H1 (cell line): ENCODE measurements at regions of chr21 and their contacts with region 1.

Region 1: DNA sequence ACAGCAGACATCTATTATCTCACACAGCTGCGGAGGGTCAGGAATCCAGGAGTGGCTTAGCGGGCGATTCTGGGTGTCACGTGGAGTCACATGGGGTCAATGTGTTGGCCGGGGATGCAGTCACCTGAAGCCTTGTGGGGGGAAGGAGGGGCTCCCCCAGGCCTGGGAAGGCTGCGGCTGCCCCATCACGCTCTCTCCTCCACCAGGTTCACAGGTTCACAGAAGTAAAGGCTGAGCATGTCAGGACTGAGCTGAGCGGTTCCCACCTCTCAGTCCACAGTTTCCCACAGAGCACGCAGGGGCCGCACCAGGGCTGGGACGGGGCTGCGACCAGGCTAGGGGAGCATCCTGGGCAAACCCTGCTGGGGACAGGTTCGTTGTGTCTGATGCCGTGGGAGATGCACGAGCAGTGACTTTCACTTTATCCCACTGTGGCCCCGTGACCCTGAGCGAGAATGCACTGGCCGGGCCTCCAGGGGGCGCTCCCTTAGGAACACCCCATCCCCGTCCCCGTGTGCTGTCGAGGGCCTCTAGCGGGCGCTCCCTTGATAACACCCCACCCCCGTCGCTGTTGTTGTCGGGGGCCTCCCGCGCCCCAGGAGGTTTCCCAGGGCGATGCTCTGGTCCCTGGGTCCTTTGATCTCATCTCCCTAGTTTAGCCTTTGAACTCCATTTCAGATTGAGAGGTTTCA is 73.2 kb upstream of the TRAPPC10 start:
- DNase-seq: peak; percentile 49 to 96
- H3K4me3 ChIP-seq: 0 out of 8 replicates have a peak overlapping the region, but pooled peaks of 1 of the 4 experiments have one; percentile 21
- H3K27ac ChIP-seq: no peak overlapping the region
- H3K4me1 ChIP-seq: peaks cover 0 to 2% (median 0%) of the 10 kb centered on the region in 4 experiments; a peak in 2 of 7 replicates
- H3K27me3 ChIP-seq: no peaks in the 10 kb centered on the region; a peak in 1 of 7 replicates
- CTCF ChIP-seq: peak in 2 of 3 experiments; percentile 99 to 100; a peak in 3 of 4 replicates
- EP300 ChIP-seq: 0 out of 3 replicates have a peak, but pooled peaks of 1 of the 2 experiments have one; percentile 40
- POLR2A ChIP-seq: no peak
- RAD21 ChIP-seq: peak; percentile 85 to 90

Region 2: DNA sequence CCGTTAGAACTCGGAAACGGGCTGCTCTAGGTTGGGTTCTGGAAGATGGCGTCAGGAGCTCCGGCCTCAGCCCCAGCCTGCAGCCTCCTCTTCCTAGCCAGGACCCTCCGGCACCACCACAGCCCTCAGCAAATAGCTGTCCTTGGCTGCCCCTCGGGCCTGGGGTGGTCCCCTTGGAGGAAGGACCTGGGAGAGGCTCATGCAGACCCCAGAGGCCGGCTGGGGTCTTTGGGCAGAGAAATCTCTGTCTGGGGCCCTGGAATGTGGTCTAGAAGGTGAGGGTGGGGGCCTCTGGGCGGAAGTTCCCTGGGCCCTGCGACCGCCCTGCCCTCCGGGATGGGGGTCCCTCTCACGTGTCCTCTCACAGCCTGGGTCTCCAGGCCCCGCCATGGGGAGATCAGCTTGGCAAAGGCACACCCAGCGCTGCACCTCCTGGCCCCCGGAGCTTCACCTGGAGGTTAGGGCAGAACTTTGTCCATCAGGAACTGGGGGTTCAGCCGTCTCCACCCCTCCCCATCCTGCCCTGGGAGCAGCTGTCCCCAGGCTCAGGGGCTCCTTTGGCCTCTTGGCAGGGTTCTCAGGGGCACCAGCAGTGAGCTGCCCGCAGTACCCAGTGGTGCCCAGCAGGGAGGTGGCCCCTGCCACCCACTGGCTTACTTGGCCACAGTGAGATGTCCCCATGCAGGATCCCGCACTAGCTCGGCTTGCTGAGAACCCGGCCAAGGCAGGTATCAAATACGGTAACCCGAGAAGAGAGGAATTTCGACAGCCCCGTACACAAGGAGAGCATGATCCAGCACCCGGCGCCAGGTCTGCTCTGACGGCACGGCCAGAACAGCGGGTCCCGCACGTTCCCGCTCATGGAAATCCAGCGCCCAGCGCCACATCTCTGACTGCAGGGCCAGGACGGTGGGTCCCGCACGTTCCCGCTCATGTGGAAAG is 112.9 kb before region 1 on chr21:
- CTCF ChIA-PET with region 1: interaction called, 14 read pairs
- POLR2A ChIA-PET with region 1: no interaction called
- DNase-seq: no peak
- H3K4me3 ChIP-seq: no peak overlapping the region
- H3K27ac ChIP-seq: no peak overlapping the region
- H3K4me1 ChIP-seq: peaks cover 0 to 7% (median 4%) of the 10 kb centered on the region in 4 experiments; a peak in 3 of 7 replicates
- H3K27me3 ChIP-seq: no peaks in the 10 kb centered on the region
- CTCF ChIP-seq: peak in 2 of 3 experiments; percentile 27 to 31; a peak in 2 of 4 replicates
- EP300 ChIP-seq: no peak
- POLR2A ChIP-seq: no peak
- RAD21 ChIP-seq: 0 out of 4 replicates have a peak, but pooled peaks of 1 of the 2 experiments have one; percentile 2

Region 3: DNA sequence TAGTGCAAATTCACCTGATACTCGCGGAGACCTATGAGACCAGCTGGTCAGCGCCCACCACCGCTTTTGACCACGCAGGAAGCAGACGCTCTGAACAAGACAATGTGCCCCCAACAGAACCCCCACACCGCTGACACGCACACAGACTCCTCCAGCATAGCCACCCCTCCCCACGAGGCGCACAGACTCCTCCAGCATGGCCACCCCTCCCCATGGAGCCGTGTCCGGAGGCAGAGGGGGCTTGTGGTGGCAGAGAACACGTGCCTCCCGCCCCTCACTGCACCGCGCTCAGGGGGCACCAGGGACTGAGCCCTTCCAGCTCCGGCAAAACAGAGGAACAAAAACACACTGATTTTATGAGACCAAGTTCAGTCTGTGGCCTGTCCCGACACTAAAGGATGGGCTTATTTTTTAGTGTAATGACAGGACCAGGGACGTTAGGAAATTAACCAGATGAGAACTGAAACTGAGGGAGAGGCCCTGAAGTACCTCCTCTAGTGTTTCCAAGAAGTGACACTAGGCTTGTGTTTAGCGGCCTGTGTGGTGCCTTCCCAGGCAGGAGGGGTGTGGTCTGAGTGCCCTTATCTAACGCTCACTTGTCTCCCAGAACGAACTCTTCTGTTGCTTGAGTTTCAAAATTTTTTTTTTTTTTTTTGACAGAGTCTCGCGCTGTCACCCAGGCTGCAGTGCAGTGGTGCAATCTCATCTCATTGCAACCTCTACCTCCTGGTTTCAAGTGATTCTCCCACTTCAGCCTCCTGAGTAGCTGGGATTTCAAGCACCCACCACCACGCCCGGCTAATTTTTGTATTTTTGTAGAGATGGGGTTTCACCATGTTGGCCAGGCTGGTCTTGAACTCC is 83.9 kb before region 1 on chr21:
- CTCF ChIA-PET with region 1: interaction called, 73 read pairs
- POLR2A ChIA-PET with region 1: no interaction called
- DNase-seq: no peak
- H3K4me3 ChIP-seq: no peak overlapping the region
- H3K27ac ChIP-seq: no peak overlapping the region
- H3K4me1 ChIP-seq: peaks cover 0 to 3% (median 1%) of the 10 kb centered on the region in 4 experiments; a peak in 1 of 7 replicates
- H3K27me3 ChIP-seq: no peaks in the 10 kb centered on the region
- CTCF ChIP-seq: no peak
- EP300 ChIP-seq: no peak
- POLR2A ChIP-seq: no peak
- RAD21 ChIP-seq: no peak

Region 4: DNA sequence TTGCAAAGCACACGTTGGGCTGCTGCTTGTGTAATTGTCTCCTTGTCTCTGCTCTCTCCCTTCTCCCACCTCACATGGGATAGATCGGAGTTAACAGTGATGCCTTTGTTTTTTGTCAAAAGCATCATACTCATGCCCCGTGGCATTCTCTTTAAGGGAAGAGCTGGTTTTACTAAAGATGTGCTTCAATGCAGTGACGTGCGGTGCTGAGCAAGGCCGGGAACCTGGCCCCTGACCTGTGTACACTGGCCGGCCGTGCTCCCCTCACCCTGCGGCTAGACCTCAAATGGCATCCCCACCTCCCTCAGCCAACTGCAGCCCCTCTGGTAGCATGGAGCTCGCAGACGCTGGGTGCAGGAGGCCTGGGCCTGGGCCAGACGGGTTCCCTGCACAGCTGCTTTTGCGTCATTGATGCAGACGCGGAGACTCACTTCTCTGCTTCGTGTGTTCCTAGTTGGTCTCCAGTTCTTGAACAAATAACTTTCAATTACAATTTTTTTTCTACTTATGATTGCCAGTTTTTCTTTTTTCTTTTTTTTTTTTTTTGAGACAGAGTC is 54.0 kb before region 1 on chr21:
- CTCF ChIA-PET with region 1: interaction called, 13 read pairs
- POLR2A ChIA-PET with region 1: no interaction called
- DNase-seq: no peak
- H3K4me3 ChIP-seq: no peak overlapping the region
- H3K27ac ChIP-seq: no peak overlapping the region
- H3K4me1 ChIP-seq: peaks cover 5 to 18% (median 10%) of the 10 kb centered on the region in 4 experiments
- H3K27me3 ChIP-seq: no peaks in the 10 kb centered on the region
- CTCF ChIP-seq: no peak
- EP300 ChIP-seq: no peak
- POLR2A ChIP-seq: no peak
- RAD21 ChIP-seq: no peak

Region 5: GRCh38 chr21:43903451-43904091 is 35.3 kb before region 1 on chr21:
- CTCF ChIA-PET with region 1: interaction called, 11 read pairs
- POLR2A ChIA-PET with region 1: no interaction called
- DNase-seq: no peak
- H3K4me3 ChIP-seq: no peak overlapping the region
- H3K27ac ChIP-seq: no peak overlapping the region
- H3K4me1 ChIP-seq: no peaks in the 10 kb centered on the region; a peak in 1 of 7 replicates
- H3K27me3 ChIP-seq: no peaks in the 10 kb centered on the region
- CTCF ChIP-seq: no peak
- EP300 ChIP-seq: no peak
- POLR2A ChIP-seq: no peak
- RAD21 ChIP-seq: no peak

Region 6: GRCh38 chr21:43956670-43957035 is 17.8 kb after region 1 on chr21:
- CTCF ChIA-PET with region 1: interaction called, 80 read pairs
- POLR2A ChIA-PET with region 1: no interaction called
- DNase-seq: no peak
- H3K4me3 ChIP-seq: no peak overlapping the region
- H3K27ac ChIP-seq: no peak overlapping the region
- H3K4me1 ChIP-seq: peaks cover 0 to 8% (median 2%) of the 10 kb centered on the region in 4 experiments; a peak in 4 of 7 replicates
- H3K27me3 ChIP-seq: no peaks in the 10 kb centered on the region; a peak in 1 of 7 replicates
- CTCF ChIP-seq: no peak
- EP300 ChIP-seq: no peak
- POLR2A ChIP-seq: no peak
- RAD21 ChIP-seq: no peak

Region 7: DNA sequence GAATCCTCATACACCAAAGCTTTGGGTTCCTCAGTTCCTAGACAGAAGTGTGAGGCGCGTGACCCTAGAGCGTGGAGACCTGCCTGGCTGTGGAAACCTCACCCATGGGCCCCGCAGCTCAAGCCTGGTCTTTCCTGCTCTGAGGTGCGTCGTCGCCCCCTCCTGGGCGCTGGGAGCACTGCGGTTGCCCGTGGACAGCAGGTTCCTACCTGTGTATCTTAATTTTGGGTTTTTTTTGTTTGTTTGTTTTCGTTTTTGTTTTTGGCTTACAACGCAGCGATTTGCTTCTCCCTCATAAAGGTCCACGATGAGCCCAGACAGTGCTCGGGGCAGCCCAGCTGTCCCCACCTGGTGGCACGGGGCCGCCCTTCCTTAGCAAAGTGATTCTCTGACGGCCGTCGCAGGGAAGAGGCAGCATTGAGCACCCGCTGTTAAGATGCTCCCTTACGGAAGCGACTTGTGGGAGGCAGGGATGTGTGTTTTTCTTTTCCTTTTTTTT is 36.6 kb after region 1 on chr21:
- CTCF ChIA-PET with region 1: interaction called, 25 read pairs
- POLR2A ChIA-PET with region 1: no interaction called
- DNase-seq: peak in 1 of 2 experiments; percentile 94
- H3K4me3 ChIP-seq: peak overlapping the region in 2 of 4 experiments; percentile 11 to 56; a peak in 4 of 8 replicates
- H3K27ac ChIP-seq: no peak overlapping the region
- H3K4me1 ChIP-seq: no peaks in the 10 kb centered on the region; a peak in 1 of 7 replicates
- H3K27me3 ChIP-seq: no peaks in the 10 kb centered on the region
- CTCF ChIP-seq: peak; percentile 85 to 93 (median 87)
- EP300 ChIP-seq: no peak
- POLR2A ChIP-seq: no peak
- RAD21 ChIP-seq: peak; percentile 89 to 90

Region 8: GRCh38 chr21:44083631-44084291 is 144.9 kb after region 1 on chr21:
- CTCF ChIA-PET with region 1: no interaction called
- POLR2A ChIA-PET with region 1: no interaction called
- DNase-seq: no peak
- H3K4me3 ChIP-seq: no peak overlapping the region
- H3K27ac ChIP-seq: no peak overlapping the region
- H3K4me1 ChIP-seq: no peaks in the 10 kb centered on the region
- H3K27me3 ChIP-seq: no peaks in the 10 kb centered on the region
- CTCF ChIP-seq: no peak
- EP300 ChIP-seq: no peak
- POLR2A ChIP-seq: no peak
- RAD21 ChIP-seq: no peak